ENCODE measurements at regions of chr2 and their contacts with region 1.

Region 1: DNA sequence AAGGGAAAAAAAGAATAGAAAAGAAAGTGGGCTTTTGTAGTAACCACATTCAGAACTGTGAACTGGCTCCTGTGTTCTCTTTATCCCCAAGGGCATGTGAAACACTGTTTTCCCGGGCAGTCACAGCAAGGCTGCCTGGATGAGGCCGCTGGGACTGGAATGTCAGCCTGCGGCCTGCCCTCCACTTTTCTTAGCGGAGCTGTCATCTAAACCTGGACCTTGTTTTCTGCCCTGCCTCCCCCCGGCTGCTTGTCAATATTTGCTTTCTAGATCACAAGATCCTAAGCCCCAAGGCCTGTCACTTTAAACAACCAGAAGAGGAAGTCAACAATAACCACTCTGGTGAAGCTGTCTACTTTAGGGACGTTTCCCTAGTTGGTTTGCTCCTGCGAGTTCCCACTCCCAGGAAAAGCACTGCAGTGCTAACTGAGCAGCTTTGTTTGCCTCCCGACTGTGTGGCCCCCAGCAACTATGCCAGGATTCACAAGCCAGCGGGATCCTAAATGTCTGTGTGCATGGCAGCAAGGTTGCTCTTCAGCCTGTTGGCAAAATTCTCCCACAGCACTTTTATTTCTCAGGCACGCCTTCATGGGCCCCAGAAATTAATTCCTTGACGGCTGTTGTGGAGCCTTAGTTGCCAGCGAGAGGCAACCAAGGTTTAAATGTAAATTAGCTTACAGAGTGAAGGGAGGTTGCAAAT is 30.6 kb downstream of the SOWAHC start:
- DNase-seq: peak; percentile 100
- ATAC-seq: peak; percentile 95
- H3K4me3 ChIP-seq: peak overlapping the region; percentile 25 to 58 (median 25); a peak in 5 of 6 replicates
- H3K27ac ChIP-seq: peak overlapping the region; percentile 98
- H3K4me1 ChIP-seq: peaks cover 84% of the 10 kb centered on the region
- H3K27me3 ChIP-seq: no peaks in the 10 kb centered on the region
- CTCF ChIP-seq: peak; percentile 22; the same call in 1 of the 2 replicates
- EP300 ChIP-seq: peak; percentile 99 to 100
- POLR2A ChIP-seq: peak; percentile 79 to 84
- RAD21 ChIP-seq: peak; percentile 50

Region 2: DNA sequence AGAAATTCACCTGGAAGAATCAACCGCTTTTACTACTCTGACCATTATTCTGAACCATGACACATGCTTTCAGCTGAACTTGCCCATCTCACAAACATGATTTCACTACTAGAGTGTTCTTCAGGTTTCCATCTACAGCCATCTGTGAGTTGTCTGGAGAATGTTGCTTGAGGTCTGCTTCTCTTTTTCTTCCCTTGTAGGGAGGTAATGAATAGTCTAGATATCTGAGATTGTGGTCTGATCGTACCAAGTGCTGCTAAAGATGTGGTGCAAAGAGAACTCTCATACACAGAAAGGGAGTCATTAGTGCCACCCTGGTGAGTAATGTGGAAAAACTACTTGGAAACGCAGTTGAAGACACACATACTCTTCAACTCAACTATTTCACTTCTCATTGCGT is 20.4 kb before region 1 on chr2:
- CTCF ChIA-PET with region 1: no interaction called
- POLR2A ChIA-PET with region 1: interaction called, 55 read pairs
- in situ Hi-C with region 1: no loop called
- intact Hi-C with region 1: no loop called
- DNase-seq: no peak
- ATAC-seq: peak; percentile 5; the same call in 2 of the 3 replicates
- H3K4me3 ChIP-seq: peak overlapping the region in 1 of 3 experiments; percentile 45; a peak in 1 of 6 replicates
- H3K27ac ChIP-seq: peak overlapping the region; percentile 33
- H3K4me1 ChIP-seq: peaks cover 48% of the 10 kb centered on the region
- H3K27me3 ChIP-seq: no peaks in the 10 kb centered on the region
- CTCF ChIP-seq: no peak
- EP300 ChIP-seq: no peak
- POLR2A ChIP-seq: no peak
- RAD21 ChIP-seq: no peak

Region 3: GRCh38 chr2:109632158-109632789 is 12.5 kb before region 1 on chr2:
- CTCF ChIA-PET with region 1: no interaction called
- POLR2A ChIA-PET with region 1: interaction called, 61 read pairs
- in situ Hi-C with region 1: no loop called
- intact Hi-C with region 1: loop called (anchors 1 kb)
- DNase-seq: peak; percentile 86
- ATAC-seq: peak; percentile 55
- H3K4me3 ChIP-seq: peak overlapping the region in 1 of 3 experiments; percentile 24; a peak in 2 of 6 replicates
- H3K27ac ChIP-seq: peak overlapping the region; percentile 68
- H3K4me1 ChIP-seq: peaks cover 74% of the 10 kb centered on the region
- H3K27me3 ChIP-seq: no peaks in the 10 kb centered on the region
- CTCF ChIP-seq: no peak; the same call in 1 of the 2 replicates
- EP300 ChIP-seq: peak; percentile 18 to 65; a peak in 1 of 4 replicates
- POLR2A ChIP-seq: no peak
- RAD21 ChIP-seq: no peak

Region 4: GRCh38 chr2:109663721-109664120 is 19.0 kb after region 1 on chr2:
- CTCF ChIA-PET with region 1: no interaction called
- POLR2A ChIA-PET with region 1: interaction called, 38 read pairs
- in situ Hi-C with region 1: no loop called
- intact Hi-C with region 1: loop called (anchors 2 kb)
- DNase-seq: peak; percentile 52
- ATAC-seq: peak; percentile 28
- H3K4me3 ChIP-seq: no peak overlapping the region
- H3K27ac ChIP-seq: no peak overlapping the region
- H3K4me1 ChIP-seq: peaks cover 50% of the 10 kb centered on the region
- H3K27me3 ChIP-seq: no peaks in the 10 kb centered on the region
- CTCF ChIP-seq: no peak
- EP300 ChIP-seq: no peak
- POLR2A ChIP-seq: no peak
- RAD21 ChIP-seq: no peak

Region 5: GRCh38 chr2:109676346-109676902 is 31.7 kb after region 1 on chr2:
- CTCF ChIA-PET with region 1: no interaction called
- POLR2A ChIA-PET with region 1: interaction called, 82 read pairs
- in situ Hi-C with region 1: no loop called
- intact Hi-C with region 1: loop called (anchors 2 kb)
- DNase-seq: no peak
- ATAC-seq: peak; percentile 21
- H3K4me3 ChIP-seq: peak overlapping the region in 2 of 3 experiments; percentile 9 to 50; a peak in 2 of 6 replicates
- H3K27ac ChIP-seq: peak overlapping the region; percentile 70
- H3K4me1 ChIP-seq: peaks cover 81% of the 10 kb centered on the region
- H3K27me3 ChIP-seq: no peaks in the 10 kb centered on the region
- CTCF ChIP-seq: no peak
- EP300 ChIP-seq: no peak
- POLR2A ChIP-seq: peak in 1 of 2 experiments; percentile 12; a peak in 1 of 4 replicates
- RAD21 ChIP-seq: no peak

Region 6: GRCh38 chr2:109690822-109691547 is 46.3 kb after region 1 on chr2:
- CTCF ChIA-PET with region 1: no interaction called
- POLR2A ChIA-PET with region 1: interaction called, 56 read pairs
- in situ Hi-C with region 1: no loop called
- intact Hi-C with region 1: no loop called
- DNase-seq: peak; percentile 96
- ATAC-seq: peak; percentile 95
- H3K4me3 ChIP-seq: peak overlapping the region; percentile 1 to 40 (median 3); a peak in 4 of 6 replicates
- H3K27ac ChIP-seq: peak overlapping the region; percentile 89
- H3K4me1 ChIP-seq: peaks cover 81% of the 10 kb centered on the region
- H3K27me3 ChIP-seq: no peaks in the 10 kb centered on the region
- CTCF ChIP-seq: no peak
- EP300 ChIP-seq: peak in 1 of 2 experiments; percentile 86; a peak in 2 of 4 replicates
- POLR2A ChIP-seq: peak; percentile 68 to 70; a peak in 3 of 4 replicates
- RAD21 ChIP-seq: peak; percentile 7; the same call in 1 of the 2 replicates

Region 7: GRCh38 chr2:109699646-109700045 is 54.9 kb after region 1 on chr2:
- CTCF ChIA-PET with region 1: no interaction called
- POLR2A ChIA-PET with region 1: interaction called, 15 read pairs
- in situ Hi-C with region 1: no loop called
- intact Hi-C with region 1: loop called (anchors 1 kb)
- DNase-seq: no peak
- ATAC-seq: peak; percentile 20; the same call in 2 of the 3 replicates
- H3K4me3 ChIP-seq: no peak overlapping the region
- H3K27ac ChIP-seq: no peak overlapping the region
- H3K4me1 ChIP-seq: peaks cover 65% of the 10 kb centered on the region
- H3K27me3 ChIP-seq: no peaks in the 10 kb centered on the region
- CTCF ChIP-seq: no peak
- EP300 ChIP-seq: no peak
- POLR2A ChIP-seq: no peak
- RAD21 ChIP-seq: no peak

Measured in HepG2 (cell line).